Motor neuron (in vitro differentiated cells): ENCODE measurements at regions of chr10 and their contacts with region 1.

Region 1: DNA sequence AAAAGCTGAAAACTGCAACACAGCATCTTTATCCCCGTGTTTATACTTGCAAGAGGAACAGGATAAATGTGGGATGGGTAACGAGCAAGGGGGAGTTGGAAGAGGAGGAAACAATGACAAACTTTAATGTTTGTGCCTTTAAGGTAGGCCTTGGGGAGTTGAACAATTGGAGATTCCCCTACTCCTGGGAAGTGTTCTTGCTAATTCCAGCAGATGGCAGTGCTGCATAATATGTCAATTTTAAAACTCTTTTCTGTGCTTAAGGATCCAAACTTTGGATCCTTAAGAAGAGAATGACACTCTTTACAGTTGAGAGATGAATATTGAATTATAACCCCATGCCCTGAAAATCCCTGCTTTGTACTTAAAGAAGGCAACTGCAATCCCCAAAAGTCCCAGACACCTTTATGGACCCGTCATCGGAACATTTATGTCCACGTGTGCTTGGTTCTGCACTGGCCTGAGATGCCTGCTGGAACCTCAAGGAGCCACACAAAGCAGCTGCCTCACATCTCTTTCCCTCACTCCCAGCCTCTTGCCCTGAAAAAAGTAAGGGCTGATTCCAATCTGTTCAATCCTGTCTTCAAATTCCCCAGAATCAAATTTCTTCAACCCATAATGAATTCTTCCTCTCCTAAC is 12.0 kb downstream of the IFIT5 start:
- ATAC-seq: peak in 7 of 8 experiments; percentile 45 to 86 (median 75)
- H3K4me3 ChIP-seq: no peak overlapping the region
- H3K27ac ChIP-seq: no peak overlapping the region
- H3K4me1 ChIP-seq: no peaks in the 10 kb centered on the region

Region 2: GRCh38 chr10:89042562-89042961 is 383.8 kb before region 1 on chr10:
- in situ Hi-C with region 1: no loop called
- ATAC-seq: peak in 2 of 8 experiments; percentile 22 to 27
- H3K4me3 ChIP-seq: no peak overlapping the region
- H3K27ac ChIP-seq: no peak overlapping the region
- H3K4me1 ChIP-seq: no peaks in the 10 kb centered on the region

Region 3: GRCh38 chr10:89310056-89310893 is 116.1 kb before region 1 on chr10:
- in situ Hi-C with region 1: no loop called
- ATAC-seq: no peak
- H3K4me3 ChIP-seq: no peak overlapping the region
- H3K27ac ChIP-seq: no peak overlapping the region
- H3K4me1 ChIP-seq: peaks cover 6 to 11% of the 10 kb centered on the region in 2 donors

Region 4: GRCh38 chr10:89351780-89352597 is 74.4 kb before region 1 on chr10:
- in situ Hi-C with region 1: no loop called
- ATAC-seq: peak; percentile 34 to 78 (median 59)
- H3K4me3 ChIP-seq: no peak overlapping the region
- H3K27ac ChIP-seq: no peak overlapping the region
- H3K4me1 ChIP-seq: peaks cover 38 to 40% of the 10 kb centered on the region in 2 donors

Region 5: DNA sequence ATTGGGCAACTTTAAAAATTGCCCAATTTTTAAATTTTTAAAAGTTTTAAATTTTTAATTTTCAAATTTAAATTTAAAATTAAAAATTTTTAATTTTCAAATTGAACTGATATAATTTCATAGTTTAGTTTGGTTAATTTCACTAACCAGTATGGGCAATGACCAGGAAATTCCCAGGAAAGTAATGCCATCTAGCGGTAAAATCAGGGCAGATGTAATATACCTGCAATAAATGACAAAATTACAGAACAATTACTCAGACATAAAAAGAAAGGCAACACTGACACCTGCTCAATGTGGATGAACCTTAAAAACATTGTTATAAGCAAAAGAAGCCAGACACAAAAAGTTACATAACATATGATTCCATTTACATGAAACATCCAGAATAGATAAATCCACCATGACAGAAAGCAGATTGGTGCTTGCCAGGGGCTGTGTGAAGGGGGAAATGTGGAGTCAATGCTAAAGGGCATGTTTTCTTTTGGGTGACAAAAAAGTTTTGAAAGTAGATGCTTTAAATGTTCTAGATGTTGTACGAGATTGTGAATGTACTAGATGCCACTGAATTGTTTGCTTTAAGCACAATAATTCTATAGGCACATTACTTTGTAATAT is 137.6 kb after region 1 on chr10:
- in situ Hi-C with region 1: loop called in 5 of 9 experiments (anchors 10 to 25 kb)
- ATAC-seq: peak in 6 of 8 experiments; percentile 47 to 71 (median 56)
- H3K4me3 ChIP-seq: no peak overlapping the region
- H3K27ac ChIP-seq: no peak overlapping the region
- H3K4me1 ChIP-seq: no peaks in the 10 kb centered on the region

Region 6: GRCh38 chr10:89653410-89653869 is 227.1 kb after region 1 on chr10:
- in situ Hi-C with region 1: no loop called
- ATAC-seq: no peak
- H3K4me3 ChIP-seq: no peak overlapping the region
- H3K27ac ChIP-seq: no peak overlapping the region
- H3K4me1 ChIP-seq: no peaks in the 10 kb centered on the region

Region 7: GRCh38 chr10:89738551-89739209 is 312.3 kb after region 1 on chr10:
- in situ Hi-C with region 1: loop called in 1 of 9 experiments (anchors 25 kb)
- ATAC-seq: no peak
- H3K4me3 ChIP-seq: no peak overlapping the region
- H3K27ac ChIP-seq: no peak overlapping the region
- H3K4me1 ChIP-seq: no peaks in the 10 kb centered on the region